Activated CD4-positive, alpha-beta memory T cell treated with anti-CD3 and anti-CD28 coated beads for 36 hours (primary cell): ENCODE measurements at regions of chr18 and their contacts with region 1.

Region 1: GRCh38 chr18:59885579-59886163 is 14.1 kb upstream of the PMAIP1 start:
- DNase-seq: peak; percentile 46
- H3K4me3 Mint-ChIP-seq: peak overlapping the region; percentile 27
- H3K27ac Mint-ChIP-seq: peak overlapping the region; percentile 63
- H3K4me1 Mint-ChIP-seq: peaks cover 37% of the 10 kb centered on the region
- H3K27me3 Mint-ChIP-seq: no peaks in the 10 kb centered on the region

Region 2: GRCh38 chr18:59846814-59847490 is 38.7 kb before region 1 on chr18:
- CTCF ChIA-PET with region 1: interaction called, 3 read pairs
- POLR2A ChIA-PET with region 1: no interaction called
- intact Hi-C with region 1: loop called (anchors 1 kb)
- DNase-seq: peak; percentile 80
- H3K4me3 Mint-ChIP-seq: no peak overlapping the region
- H3K27ac Mint-ChIP-seq: peak overlapping the region; percentile 74
- H3K4me1 Mint-ChIP-seq: peaks cover 16% of the 10 kb centered on the region
- H3K27me3 Mint-ChIP-seq: peaks cover 1% of the 10 kb centered on the region

Region 3: GRCh38 chr18:59907172-59907571 is 21.5 kb after region 1 on chr18:
- CTCF ChIA-PET with region 1: no interaction called
- POLR2A ChIA-PET with region 1: interaction called, 93 read pairs
- intact Hi-C with region 1: no loop called
- DNase-seq: peak; percentile 34
- H3K4me3 Mint-ChIP-seq: peak overlapping the region; percentile 3
- H3K27ac Mint-ChIP-seq: peak overlapping the region; percentile 76
- H3K4me1 Mint-ChIP-seq: peaks cover 64% of the 10 kb centered on the region
- H3K27me3 Mint-ChIP-seq: no peaks in the 10 kb centered on the region